ENCODE measurements at regions of chr1 and their contacts with region 1.

Region 1: DNA sequence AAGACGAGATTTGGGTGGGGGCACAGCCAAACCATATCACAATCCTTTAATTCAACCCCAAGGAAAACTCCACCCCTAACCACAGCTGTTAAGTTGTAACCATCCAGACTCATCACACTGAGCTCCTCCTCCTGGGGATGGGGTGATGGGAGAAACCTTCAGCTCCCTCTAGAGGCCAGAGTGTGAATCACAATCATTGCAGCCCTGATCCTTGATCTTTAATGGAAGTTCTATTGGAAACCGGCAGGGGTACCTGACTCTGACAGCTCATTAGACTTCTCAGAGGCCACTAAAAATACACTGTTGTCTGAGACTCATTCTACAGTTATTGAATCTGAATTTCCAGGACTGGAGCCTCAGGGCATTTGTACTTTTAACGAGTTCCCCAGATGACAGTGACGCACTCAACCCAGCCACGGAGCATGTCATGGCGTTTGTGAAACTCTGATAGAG is 127.2 kb downstream of the IGSF21 start:
- DNase-seq: peak; percentile 77
- ATAC-seq: peak; percentile 82
- H3K4me3 Mint-ChIP-seq: no peak overlapping the region
- H3K27ac Mint-ChIP-seq: peak overlapping the region; percentile 86
- H3K4me1 Mint-ChIP-seq: peaks cover 78% of the 10 kb centered on the region
- H3K27me3 Mint-ChIP-seq: no peaks in the 10 kb centered on the region; the same call in 1 of the 2 replicates
- CTCF ChIP-seq: peak; percentile 73; the same call in 1 of the 2 replicates

Region 2: DNA sequence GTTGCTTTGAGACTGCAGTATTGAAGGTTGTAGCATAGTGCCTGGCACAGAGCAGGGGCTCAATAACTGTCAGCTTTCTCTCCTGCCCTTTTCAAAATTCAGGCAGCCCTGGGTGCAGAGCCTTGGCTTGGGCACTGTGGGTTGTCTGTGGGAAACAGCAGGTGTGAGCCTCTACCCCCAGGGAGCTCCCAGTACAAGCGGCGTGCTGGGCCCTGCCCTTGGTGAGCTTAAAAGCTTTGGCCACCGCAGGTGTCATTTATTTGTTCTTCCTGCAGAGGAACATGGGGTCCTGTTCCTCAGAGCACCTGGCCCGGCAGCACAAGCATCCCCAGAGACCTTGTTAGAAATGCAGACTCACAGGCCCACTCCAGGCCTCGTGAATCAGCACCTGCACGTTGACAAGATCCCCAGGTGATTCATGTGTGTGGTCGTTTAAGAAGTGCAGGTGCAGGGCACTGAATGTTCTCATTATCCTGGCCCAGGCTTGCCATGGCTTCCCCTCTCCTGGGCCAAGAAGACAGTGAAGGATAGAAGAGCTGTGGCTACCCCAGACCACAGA is 157.1 kb before region 1 on chr1:
- CTCF ChIA-PET with region 1: no interaction called
- POLR2A ChIA-PET with region 1: no interaction called
- DNase-seq: no peak
- ATAC-seq: no peak
- H3K4me3 Mint-ChIP-seq: no peak overlapping the region
- H3K27ac Mint-ChIP-seq: no peak overlapping the region
- H3K4me1 Mint-ChIP-seq: peaks cover 19% of the 10 kb centered on the region
- H3K27me3 Mint-ChIP-seq: peaks cover 8% of the 10 kb centered on the region
- CTCF ChIP-seq: no peak

Region 3: DNA sequence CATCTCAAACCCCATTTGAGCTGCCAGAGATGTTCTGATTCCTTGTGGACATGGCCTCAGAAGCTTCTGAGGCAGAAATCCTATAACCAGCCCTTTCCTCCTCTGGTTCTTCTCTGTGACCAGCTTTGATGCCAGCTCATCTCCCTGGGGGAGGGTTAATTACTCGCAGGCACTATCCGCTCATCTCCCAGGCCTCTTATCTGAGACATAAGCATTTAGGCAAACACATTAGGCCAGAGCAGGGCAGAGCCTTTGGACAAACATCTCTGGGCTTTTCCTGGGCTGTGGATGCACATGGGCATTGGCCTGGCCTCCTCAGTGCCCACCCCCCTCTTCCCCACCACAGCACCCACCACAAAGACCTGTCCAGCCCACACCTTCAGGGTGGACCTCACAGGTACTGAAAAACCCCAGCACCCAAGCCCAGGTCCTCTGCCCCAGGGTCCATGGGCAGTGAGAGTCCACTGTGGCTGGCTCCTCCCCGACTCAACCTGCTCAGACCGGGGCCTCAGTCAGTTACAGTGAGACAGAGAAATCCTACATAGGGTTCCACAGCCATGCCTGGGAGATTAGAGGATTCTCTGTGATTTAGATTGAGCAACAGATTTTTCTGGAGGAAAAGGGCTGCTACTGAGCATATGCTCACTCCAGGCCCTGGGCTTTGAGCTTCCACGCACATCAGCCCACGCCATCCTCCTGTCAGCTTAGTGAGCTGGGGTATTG is 100.3 kb before region 1 on chr1:
- CTCF ChIA-PET with region 1: interaction called, 11 read pairs
- POLR2A ChIA-PET with region 1: no interaction called
- DNase-seq: no peak
- ATAC-seq: no peak
- H3K4me3 Mint-ChIP-seq: no peak overlapping the region
- H3K27ac Mint-ChIP-seq: no peak overlapping the region
- H3K4me1 Mint-ChIP-seq: peaks cover 31% of the 10 kb centered on the region
- H3K27me3 Mint-ChIP-seq: no peaks in the 10 kb centered on the region
- CTCF ChIP-seq: no peak

Region 4: GRCh38 chr1:18205319-18205718 is 29.5 kb before region 1 on chr1:
- CTCF ChIA-PET with region 1: interaction called, 14 read pairs
- POLR2A ChIA-PET with region 1: no interaction called
- DNase-seq: no peak
- ATAC-seq: no peak
- H3K4me3 Mint-ChIP-seq: no peak overlapping the region
- H3K27ac Mint-ChIP-seq: no peak overlapping the region
- H3K4me1 Mint-ChIP-seq: peaks cover 43% of the 10 kb centered on the region
- H3K27me3 Mint-ChIP-seq: peaks cover 2% of the 10 kb centered on the region; the same call in 1 of the 2 replicates
- CTCF ChIP-seq: no peak

Region 5: GRCh38 chr1:18246543-18246942 is 11.7 kb after region 1 on chr1:
- CTCF ChIA-PET with region 1: interaction called, 87 read pairs
- POLR2A ChIA-PET with region 1: no interaction called
- DNase-seq: peak; percentile 35
- ATAC-seq: peak; percentile 65; the same call in 1 of the 2 replicates
- H3K4me3 Mint-ChIP-seq: no peak overlapping the region
- H3K27ac Mint-ChIP-seq: no peak overlapping the region; the same call in 1 of the 2 replicates
- H3K4me1 Mint-ChIP-seq: peaks cover 19% of the 10 kb centered on the region
- H3K27me3 Mint-ChIP-seq: no peaks in the 10 kb centered on the region
- CTCF ChIP-seq: no peak

Region 6: GRCh38 chr1:18282851-18283600 is 48.2 kb after region 1 on chr1:
- CTCF ChIA-PET with region 1: interaction called, 17 read pairs
- POLR2A ChIA-PET with region 1: no interaction called
- DNase-seq: peak; percentile 83
- ATAC-seq: peak; percentile 44
- H3K4me3 Mint-ChIP-seq: no peak overlapping the region
- H3K27ac Mint-ChIP-seq: no peak overlapping the region; the same call in 1 of the 2 replicates
- H3K4me1 Mint-ChIP-seq: peaks cover 81% of the 10 kb centered on the region
- H3K27me3 Mint-ChIP-seq: no peaks in the 10 kb centered on the region
- CTCF ChIP-seq: no peak

Region 7: GRCh38 chr1:18322368-18323032 is 87.7 kb after region 1 on chr1:
- CTCF ChIA-PET with region 1: interaction called, 15 read pairs
- POLR2A ChIA-PET with region 1: no interaction called
- DNase-seq: peak; percentile 66
- ATAC-seq: peak; percentile 67
- H3K4me3 Mint-ChIP-seq: no peak overlapping the region
- H3K27ac Mint-ChIP-seq: no peak overlapping the region
- H3K4me1 Mint-ChIP-seq: peaks cover 29% of the 10 kb centered on the region
- H3K27me3 Mint-ChIP-seq: peaks cover 38% of the 10 kb centered on the region
- CTCF ChIP-seq: peak; percentile 75

Measured in WTC11 (cell line).